CD4-positive, alpha-beta T cell (primary cell): ENCODE measurements at regions of chr1 and their contacts with region 1.

Region 1: GRCh38 chr1:19495000-19495656 is 9.8 kb upstream of the CAPZB start:
- DNase-seq: no peak
- ATAC-seq: no peak
- H3K4me3 ChIP-seq: no peak overlapping the region
- H3K4me3 Mint-ChIP-seq: no peak overlapping the region
- H3K27ac ChIP-seq: no peak overlapping the region
- H3K27ac Mint-ChIP-seq: no peak overlapping the region
- H3K4me1 ChIP-seq: peaks cover 15% of the 10 kb centered on the region
- H3K4me1 Mint-ChIP-seq: peaks cover 39% of the 10 kb centered on the region
- H3K27me3 ChIP-seq: no peaks in the 10 kb centered on the region
- H3K27me3 Mint-ChIP-seq: no peaks in the 10 kb centered on the region
- CTCF ChIP-seq: no peak

Region 2: DNA sequence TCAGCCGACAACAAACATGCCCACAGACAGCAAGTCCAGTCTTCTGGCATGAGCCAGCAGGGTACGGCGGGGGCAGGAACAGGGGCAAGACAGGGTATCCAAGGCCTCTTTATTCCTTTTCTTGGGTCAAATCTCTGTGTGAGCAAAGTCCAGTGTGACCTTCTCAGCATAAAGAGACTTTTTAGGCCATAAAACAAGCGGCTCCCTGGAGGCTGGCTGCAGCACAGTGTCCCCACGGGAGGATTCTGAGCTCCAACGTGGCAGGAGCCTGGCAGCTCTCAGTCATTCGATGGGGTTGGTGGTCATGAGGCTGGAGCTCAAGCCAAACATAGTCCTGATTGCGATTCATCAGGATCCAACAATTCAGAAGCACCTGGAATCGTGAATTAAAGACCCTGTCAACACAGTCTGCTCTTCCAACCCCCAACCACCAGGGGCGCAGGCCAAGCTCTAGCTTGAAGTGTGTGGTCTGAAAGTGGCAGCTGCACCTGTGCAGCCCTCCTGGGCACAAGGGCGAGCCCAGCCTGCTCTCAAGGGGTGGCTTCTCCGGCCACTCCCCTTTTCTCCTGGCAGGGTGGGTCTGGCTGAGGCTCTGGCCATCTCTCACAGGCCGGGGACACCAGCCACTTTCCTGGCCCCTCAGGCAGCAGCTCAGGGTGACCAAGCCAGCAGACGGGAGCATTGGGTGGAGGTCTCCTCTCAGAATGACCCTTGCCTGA is 120.9 kb before region 1 on chr1:
- CTCF ChIA-PET with region 1: no interaction called
- POLR2A ChIA-PET with region 1: no interaction called
- intact Hi-C with region 1: no loop called
- DNase-seq: peak in 3 of 14 experiments; percentile 28 to 42 (median 39)
- ATAC-seq: no peak
- H3K4me3 ChIP-seq: no peak overlapping the region
- H3K4me3 Mint-ChIP-seq: no peak overlapping the region
- H3K27ac ChIP-seq: no peak overlapping the region
- H3K27ac Mint-ChIP-seq: no peak overlapping the region
- H3K4me1 ChIP-seq: peaks cover 21% of the 10 kb centered on the region
- H3K4me1 Mint-ChIP-seq: peaks cover 20% of the 10 kb centered on the region
- H3K27me3 ChIP-seq: no peaks in the 10 kb centered on the region
- H3K27me3 Mint-ChIP-seq: no peaks in the 10 kb centered on the region
- CTCF ChIP-seq: no peak

Region 3: DNA sequence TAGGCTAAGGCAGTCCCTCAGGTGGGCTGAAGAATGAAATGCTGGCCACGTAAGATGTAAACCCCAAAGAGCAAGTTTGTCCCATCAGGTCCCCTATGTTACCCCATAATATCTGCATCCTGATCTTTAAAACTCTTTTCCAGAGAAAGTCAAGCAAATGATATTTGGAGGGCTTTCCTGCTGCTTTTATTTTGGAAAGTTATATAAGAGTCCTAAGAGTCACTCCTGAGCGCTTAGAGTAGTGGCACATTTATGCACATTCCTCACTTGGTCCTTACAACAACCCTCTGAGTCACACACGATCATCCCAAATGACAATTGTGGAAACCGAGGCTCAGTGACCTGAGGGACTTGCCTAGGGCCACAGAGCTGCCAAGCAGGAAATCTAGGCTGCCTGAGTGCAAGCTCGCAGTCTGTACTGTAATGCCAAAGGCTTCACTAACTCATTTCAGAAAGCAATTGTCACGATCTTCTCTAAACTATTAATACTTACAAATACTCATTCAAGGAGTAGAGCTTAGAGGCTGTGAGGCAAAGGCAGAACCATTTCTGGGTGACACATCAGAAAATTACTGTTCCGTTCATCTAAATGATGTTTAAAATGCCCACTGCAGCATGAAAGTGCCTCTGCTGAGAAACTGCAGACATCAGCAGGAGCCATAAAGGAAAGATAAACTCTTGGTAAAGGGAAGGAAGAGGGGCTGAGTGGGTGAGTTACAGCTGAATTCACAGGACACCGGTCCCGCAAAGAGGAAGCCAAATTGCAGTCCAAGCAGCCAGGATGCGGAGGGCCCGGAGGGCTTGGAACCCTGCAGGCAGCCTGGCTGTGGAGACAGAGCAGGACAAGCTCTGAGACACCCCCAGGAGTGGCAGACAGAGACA is 40.6 kb before region 1 on chr1:
- CTCF ChIA-PET with region 1: no interaction called
- POLR2A ChIA-PET with region 1: no interaction called
- intact Hi-C with region 1: loop called in 1 of 2 experiments (anchors 5 kb)
- DNase-seq: no peak
- ATAC-seq: peak; percentile 25
- H3K4me3 ChIP-seq: peak overlapping the region; percentile 6
- H3K4me3 Mint-ChIP-seq: peak overlapping the region; percentile 52
- H3K27ac ChIP-seq: peak overlapping the region; percentile 1 to 32
- H3K27ac Mint-ChIP-seq: peak overlapping the region; percentile 86
- H3K4me1 ChIP-seq: peaks cover 90% of the 10 kb centered on the region
- H3K4me1 Mint-ChIP-seq: peaks cover 87% of the 10 kb centered on the region
- H3K27me3 ChIP-seq: no peaks in the 10 kb centered on the region
- H3K27me3 Mint-ChIP-seq: no peaks in the 10 kb centered on the region
- CTCF ChIP-seq: no peak